ENCODE measurements at regions of chr2 and their contacts with region 1.

Region 1: GRCh38 chr2:129748653-129749052 is 230.8 kb upstream of the RAB6C start:
- DNase-seq: no peak
- ATAC-seq: peak; percentile 90
- H3K4me3 Mint-ChIP-seq: no peak overlapping the region
- H3K27ac Mint-ChIP-seq: no peak overlapping the region; the same call in 1 of the 2 replicates
- H3K4me1 Mint-ChIP-seq: peaks cover 19% of the 10 kb centered on the region
- H3K27me3 Mint-ChIP-seq: no peaks in the 10 kb centered on the region; the same call in 1 of the 2 replicates
- CTCF ChIP-seq: no peak

Region 2: GRCh38 chr2:129193961-129194360 is 554.7 kb before region 1 on chr2:
- CTCF ChIA-PET with region 1: interaction called, 10 read pairs
- POLR2A ChIA-PET with region 1: no interaction called
- DNase-seq: peak; percentile 31
- ATAC-seq: peak; percentile 32; the same call in 1 of the 2 replicates
- H3K4me3 Mint-ChIP-seq: no peak overlapping the region
- H3K27ac Mint-ChIP-seq: no peak overlapping the region
- H3K4me1 Mint-ChIP-seq: peaks cover 50% of the 10 kb centered on the region
- H3K27me3 Mint-ChIP-seq: peaks cover 14% of the 10 kb centered on the region
- CTCF ChIP-seq: no peak

Region 3: GRCh38 chr2:129587426-129588064 is 161.1 kb before region 1 on chr2:
- CTCF ChIA-PET with region 1: interaction called, 28 read pairs
- POLR2A ChIA-PET with region 1: no interaction called
- DNase-seq: peak; percentile 82
- ATAC-seq: peak; percentile 98
- H3K4me3 Mint-ChIP-seq: no peak overlapping the region; the same call in 1 of the 2 replicates
- H3K27ac Mint-ChIP-seq: no peak overlapping the region
- H3K4me1 Mint-ChIP-seq: peaks cover 2% of the 10 kb centered on the region
- H3K27me3 Mint-ChIP-seq: peaks cover 22% of the 10 kb centered on the region
- CTCF ChIP-seq: peak; percentile 66

Region 4: GRCh38 chr2:129708221-129708967 is 40.3 kb before region 1 on chr2:
- CTCF ChIA-PET with region 1: interaction called, 13 read pairs
- POLR2A ChIA-PET with region 1: no interaction called
- DNase-seq: no peak
- ATAC-seq: no peak
- H3K4me3 Mint-ChIP-seq: no peak overlapping the region
- H3K27ac Mint-ChIP-seq: no peak overlapping the region
- H3K4me1 Mint-ChIP-seq: peaks cover 38% of the 10 kb centered on the region
- H3K27me3 Mint-ChIP-seq: no peaks in the 10 kb centered on the region; the same call in 1 of the 2 replicates
- CTCF ChIP-seq: no peak; the same call in 1 of the 2 replicates

Region 5: GRCh38 chr2:129758784-129759471 is 10.3 kb after region 1 on chr2:
- CTCF ChIA-PET with region 1: interaction called, 16 read pairs
- POLR2A ChIA-PET with region 1: no interaction called
- DNase-seq: no peak
- ATAC-seq: no peak
- H3K4me3 Mint-ChIP-seq: peak overlapping the region; percentile 55
- H3K27ac Mint-ChIP-seq: peak overlapping the region; percentile 98; the same call in 1 of the 2 replicates
- H3K4me1 Mint-ChIP-seq: peaks cover 32% of the 10 kb centered on the region
- H3K27me3 Mint-ChIP-seq: peaks cover 6% of the 10 kb centered on the region; the same call in 1 of the 2 replicates
- CTCF ChIP-seq: no peak

Measured in WTC11 (cell line).